Left colon (tissue), 2 donors: ENCODE measurements at regions of chr5 and their contacts with region 1.

Region 1: DNA sequence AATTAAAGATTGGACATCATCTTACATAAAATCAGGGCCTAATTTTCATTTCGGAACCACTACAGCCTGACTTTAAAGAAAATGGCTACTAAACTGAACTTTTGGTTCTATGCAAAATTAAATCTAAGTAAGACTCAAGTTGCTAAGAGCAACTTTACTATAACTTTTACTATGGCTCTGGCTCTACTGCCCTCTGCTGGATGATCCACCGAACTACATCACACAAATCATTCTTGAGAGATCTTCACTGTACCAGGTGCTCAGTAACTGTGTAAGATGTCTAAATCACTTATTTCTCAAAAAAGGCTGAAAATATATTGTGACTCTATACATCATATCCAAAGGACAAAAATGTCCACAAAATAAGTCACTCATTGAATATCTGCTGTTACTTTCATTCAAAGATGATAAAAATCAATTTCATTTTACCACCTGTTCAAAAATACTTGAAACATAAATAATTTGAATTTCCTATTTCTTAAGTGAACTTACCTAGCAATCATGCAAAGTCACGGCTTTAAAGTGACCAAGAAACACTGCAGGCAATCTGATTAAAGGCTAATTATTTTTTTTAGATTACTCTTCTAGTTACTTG is 13.5 kb downstream of the MOCS2 start:
- DNase-seq: peak in 1 of 2 donors; percentile 66
- ATAC-seq: peak; percentile 67

Region 2: DNA sequence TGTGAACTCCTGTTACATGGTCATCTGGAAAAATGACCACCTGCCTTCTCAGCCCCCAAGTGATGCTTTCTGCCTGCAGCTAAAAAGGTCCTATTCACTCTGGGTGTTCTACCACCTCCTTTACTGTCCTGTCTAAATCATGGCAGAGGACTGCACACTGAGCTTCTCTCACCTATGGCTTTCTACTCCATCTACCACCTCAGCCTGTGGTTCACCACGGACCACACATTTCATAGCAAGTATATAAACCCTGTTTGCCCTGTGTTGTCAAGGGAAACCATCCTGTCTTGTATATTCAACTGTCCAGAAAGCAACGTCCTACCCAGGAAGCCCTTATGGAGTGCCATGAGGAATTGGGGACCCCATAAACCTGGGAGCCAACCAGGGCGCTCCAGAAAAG is 475.7 kb before region 1 on chr5:
- intact Hi-C with region 1: no loop called
- DNase-seq: no peak
- ATAC-seq: no peak

Region 3: GRCh38 chr5:52915176-52915875 is 180.7 kb before region 1 on chr5:
- intact Hi-C with region 1: no loop called
- DNase-seq: no peak
- ATAC-seq: peak; percentile 88

Region 4: GRCh38 chr5:52948418-52949076 is 147.5 kb before region 1 on chr5:
- intact Hi-C with region 1: loop called (anchors 2 to 10 kb)
- DNase-seq: peak; percentile 45 to 47
- ATAC-seq: peak; percentile 100

Region 5: DNA sequence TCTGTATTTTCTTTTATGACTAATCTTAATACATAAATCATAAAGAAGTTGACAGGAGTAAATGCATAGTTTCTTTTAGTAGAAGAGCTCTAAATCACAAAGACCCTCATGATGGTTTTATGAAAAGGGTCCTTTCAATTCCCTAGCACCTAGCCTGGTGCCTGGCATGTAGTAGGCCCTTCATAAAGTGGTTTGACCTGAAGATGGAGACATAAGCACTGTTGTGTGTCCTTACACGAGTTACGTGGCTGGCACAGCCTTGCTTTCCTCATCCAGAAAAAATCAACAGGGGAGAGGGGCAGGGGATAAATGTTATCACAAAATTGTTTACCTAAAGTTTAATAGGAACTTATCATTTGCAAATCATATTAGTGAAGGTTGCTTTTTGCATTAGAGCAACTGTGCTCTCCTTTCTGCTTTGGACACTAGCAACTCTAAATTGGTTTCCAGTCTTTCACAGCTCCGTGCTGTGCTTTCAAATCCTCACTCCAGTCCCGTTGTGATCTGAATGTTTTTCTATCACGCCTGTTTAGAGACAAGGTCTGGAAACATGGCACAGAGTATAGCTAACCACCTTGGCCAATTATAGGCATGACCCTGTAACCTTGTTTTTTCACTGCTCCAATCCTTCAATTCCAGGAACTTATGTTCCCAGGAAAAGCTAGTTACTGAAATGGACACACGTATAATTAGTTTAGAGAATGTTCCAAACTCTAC is 1158.6 kb after region 1 on chr5:
- intact Hi-C with region 1: no loop called
- DNase-seq: no peak
- ATAC-seq: peak; percentile 77